Endothelial cell of umbilical vein (primary cell): ENCODE measurements at regions of chr2 and their contacts with region 1.

Region 1: GRCh38 chr2:15939854-15940660 is at the start of gene MYCN:
- DNase-seq: peak; percentile 59
- H3K4me3 ChIP-seq: peak within 1 kb of the TSS in 2 of 3 experiments; percentile 2 to 47
- H3K27ac ChIP-seq: no peak within 1 kb of the TSS
- H3K4me1 ChIP-seq: peaks cover 13% of the 10 kb centered on the region
- H3K27me3 ChIP-seq: peaks cover 42 to 57% of the 10 kb centered on the region in 2 experiments
- CTCF ChIP-seq: no peak
- POLR2A ChIP-seq: no peak
- total RNA-seq, gene MYCN: 3.6 and 6.8 TPM in 2 replicates

Region 2: GRCh38 chr2:15748736-15749323 is 191.2 kb before region 1 on chr2:
- CTCF ChIA-PET with region 1: interaction called, 3 read pairs
- POLR2A ChIA-PET with region 1: no interaction called
- dilution Hi-C with region 1: no loop called
- intact Hi-C with region 1: loop called (anchors 5 kb)
- DNase-seq: no peak
- H3K4me3 ChIP-seq: no peak overlapping the region
- H3K27ac ChIP-seq: no peak overlapping the region
- H3K4me1 ChIP-seq: peaks cover 16% of the 10 kb centered on the region
- H3K27me3 ChIP-seq: peaks cover 0 to 2% of the 10 kb centered on the region in 2 experiments
- CTCF ChIP-seq: peak; percentile 51
- POLR2A ChIP-seq: no peak

Region 3: DNA sequence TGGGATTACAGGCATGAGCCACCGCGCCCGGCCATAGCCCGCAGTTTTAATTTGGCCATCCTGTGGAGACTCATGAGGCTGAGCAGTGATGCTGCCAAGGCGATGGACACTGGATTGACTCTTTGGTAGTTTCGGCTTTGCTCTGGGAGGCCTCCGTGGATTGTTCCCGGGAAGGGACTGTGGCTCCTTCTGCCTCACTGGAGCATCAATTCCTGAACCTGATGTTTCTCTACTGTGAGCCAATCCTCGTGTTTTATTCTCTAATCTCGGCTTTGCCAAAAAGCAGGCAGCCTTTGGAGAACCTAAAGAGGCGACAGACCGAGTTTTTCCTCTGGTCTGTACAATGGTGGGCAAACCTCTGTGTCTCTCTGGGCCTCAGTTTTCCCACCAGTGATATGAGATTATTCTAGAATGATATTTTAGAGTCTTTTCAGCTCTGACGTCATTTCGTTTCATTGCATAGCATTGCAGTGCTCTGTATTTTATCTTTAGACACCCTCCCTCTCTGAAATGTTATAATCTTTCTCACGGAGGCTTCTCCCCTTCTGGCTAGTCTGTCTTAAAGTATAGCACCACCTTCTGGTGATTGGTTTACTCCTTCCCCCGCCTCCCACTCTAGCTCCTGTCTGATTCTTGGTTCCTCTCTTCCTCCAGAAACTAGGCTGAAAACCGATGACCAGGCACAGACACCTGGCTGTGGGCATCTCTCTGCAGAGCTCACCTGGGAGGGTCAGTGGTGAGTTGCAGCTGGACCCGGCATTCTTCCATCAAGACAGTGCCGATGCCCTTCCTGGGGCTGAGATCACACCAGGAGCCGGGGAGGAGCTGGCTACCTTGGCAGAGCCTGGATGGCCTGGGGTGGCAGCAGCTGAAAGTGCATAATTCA is 341.6 kb after region 1 on chr2:
- CTCF ChIA-PET with region 1: no interaction called
- POLR2A ChIA-PET with region 1: no interaction called
- dilution Hi-C with region 1: no loop called
- intact Hi-C with region 1: loop called (anchors 1 kb)
- DNase-seq: no peak
- H3K4me3 ChIP-seq: no peak overlapping the region
- H3K27ac ChIP-seq: no peak overlapping the region
- H3K4me1 ChIP-seq: no peaks in the 10 kb centered on the region
- H3K27me3 ChIP-seq: no peaks in the 10 kb centered on the region
- CTCF ChIP-seq: no peak
- POLR2A ChIP-seq: no peak

Region 4: GRCh38 chr2:16507655-16508489 is 567.8 kb after region 1 on chr2:
- CTCF ChIA-PET with region 1: interaction called, 14 read pairs
- POLR2A ChIA-PET with region 1: no interaction called
- dilution Hi-C with region 1: no loop called
- intact Hi-C with region 1: loop called (anchors 2 kb)
- DNase-seq: peak; percentile 39
- H3K4me3 ChIP-seq: peak overlapping the region in 1 of 3 experiments; percentile 16
- H3K27ac ChIP-seq: no peak overlapping the region
- H3K4me1 ChIP-seq: no peaks in the 10 kb centered on the region
- H3K27me3 ChIP-seq: peaks cover 19 to 27% of the 10 kb centered on the region in 2 experiments
- CTCF ChIP-seq: peak; percentile 47 to 80
- POLR2A ChIP-seq: no peak

Region 5: DNA sequence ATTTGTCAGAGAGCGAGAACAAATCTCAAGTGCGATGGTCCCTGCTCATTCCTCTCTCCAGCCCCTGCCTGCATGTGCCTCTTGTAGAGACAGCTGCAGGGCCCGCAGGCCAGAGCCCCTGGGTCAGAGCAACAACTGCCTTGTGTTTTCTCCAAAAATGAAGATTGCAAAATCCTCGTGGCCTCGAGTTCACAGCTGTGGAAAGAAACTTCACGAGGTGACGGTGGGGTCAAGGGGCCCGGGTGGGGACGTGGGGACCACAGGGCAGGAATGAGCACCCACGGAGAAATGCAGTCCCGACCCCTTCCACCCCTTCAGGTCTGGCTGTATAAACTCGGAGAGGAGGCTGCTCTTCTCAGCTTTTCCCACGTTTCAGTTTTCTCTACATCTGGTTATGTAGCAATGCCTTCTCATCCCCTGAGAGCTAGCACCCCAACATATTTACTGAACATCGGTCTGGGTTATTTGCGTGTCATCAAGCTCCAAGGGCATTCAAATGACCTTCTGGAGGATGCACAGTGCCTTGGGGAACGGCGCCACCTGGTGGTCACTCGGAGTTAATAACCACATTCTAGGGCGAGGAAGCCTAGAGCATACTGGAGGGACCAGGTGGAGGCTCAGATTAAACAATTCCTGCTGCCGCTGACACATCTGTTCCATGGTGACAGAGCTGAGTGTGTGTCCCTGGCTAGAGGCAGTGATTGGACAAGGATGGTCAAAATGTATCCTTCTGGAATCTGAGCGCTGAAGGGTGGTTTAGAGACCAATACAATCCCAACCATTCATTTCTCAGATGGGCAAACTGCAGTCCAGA is 817.0 kb after region 1 on chr2:
- CTCF ChIA-PET with region 1: interaction called, 10 read pairs
- POLR2A ChIA-PET with region 1: no interaction called
- dilution Hi-C with region 1: no loop called
- intact Hi-C with region 1: no loop called
- DNase-seq: peak; percentile 67
- H3K4me3 ChIP-seq: no peak overlapping the region
- H3K27ac ChIP-seq: no peak overlapping the region
- H3K4me1 ChIP-seq: no peaks in the 10 kb centered on the region
- H3K27me3 ChIP-seq: peaks cover 0 to 2% of the 10 kb centered on the region in 2 experiments
- CTCF ChIP-seq: peak; percentile 78 to 84
- POLR2A ChIP-seq: no peak